GM10248 (cell line): ENCODE measurements at regions of chr12 and their contacts with region 1.

Region 1: DNA sequence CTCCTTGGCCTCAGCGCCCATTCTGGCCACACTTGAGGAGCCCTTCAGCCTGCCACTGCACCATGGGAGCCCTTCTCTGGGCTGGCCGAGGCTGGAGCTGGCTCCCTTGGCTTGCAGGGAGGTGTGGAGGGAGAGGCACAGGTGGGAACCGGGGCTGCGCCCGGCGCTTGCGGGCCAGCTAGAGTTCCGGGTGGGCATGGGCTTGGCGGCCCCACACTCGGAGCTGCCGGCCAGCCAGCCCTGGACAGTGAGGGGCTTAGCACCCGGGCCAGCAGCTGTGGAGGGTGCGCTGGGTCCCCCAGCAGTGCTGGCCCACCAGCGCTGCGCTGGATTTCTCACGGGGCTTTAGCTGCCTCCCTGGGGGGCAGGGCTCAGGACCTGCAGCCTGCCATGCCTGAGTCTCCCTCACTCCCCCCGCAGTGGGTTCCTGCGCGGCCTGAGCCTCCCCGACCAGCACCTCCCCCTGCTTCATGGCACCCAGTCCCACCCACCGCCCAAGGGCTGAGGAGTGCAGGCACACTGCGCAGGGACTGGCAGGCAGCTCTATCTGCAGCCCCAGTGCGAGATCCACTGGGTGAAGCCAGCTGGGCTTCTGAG is 28.0 kb downstream of the TMEM117 start:
- DNase-seq: no peak
- CTCF ChIP-seq: no peak

Region 2: GRCh38 chr12:43676183-43676813 is 187.6 kb before region 1 on chr12:
- CTCF ChIA-PET with region 1: no interaction called
- POLR2A ChIA-PET with region 1: no interaction called
- DNase-seq: peak; percentile 51
- CTCF ChIP-seq: peak; percentile 56

Region 3: DNA sequence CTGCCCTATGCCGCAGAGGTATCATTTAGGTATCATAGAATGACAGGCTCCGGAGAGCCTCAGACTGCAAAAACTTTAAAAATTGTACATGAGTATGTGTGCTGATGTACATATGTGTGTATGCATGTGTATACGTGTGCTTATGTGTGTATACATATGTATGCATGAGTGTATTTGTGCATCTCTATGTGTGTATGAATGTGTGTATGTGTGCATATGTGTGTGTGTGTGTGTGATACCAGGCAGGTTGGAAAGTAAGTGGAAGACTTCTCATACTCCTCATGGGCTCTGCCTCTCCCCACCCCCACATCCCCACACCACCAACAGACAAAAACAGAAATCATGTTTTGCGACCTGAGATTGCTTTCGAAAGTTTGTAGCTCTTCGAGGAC is 28.6 kb before region 1 on chr12:
- CTCF ChIA-PET with region 1: no interaction called
- POLR2A ChIA-PET with region 1: no interaction called
- DNase-seq: no peak
- CTCF ChIP-seq: no peak

Region 4: DNA sequence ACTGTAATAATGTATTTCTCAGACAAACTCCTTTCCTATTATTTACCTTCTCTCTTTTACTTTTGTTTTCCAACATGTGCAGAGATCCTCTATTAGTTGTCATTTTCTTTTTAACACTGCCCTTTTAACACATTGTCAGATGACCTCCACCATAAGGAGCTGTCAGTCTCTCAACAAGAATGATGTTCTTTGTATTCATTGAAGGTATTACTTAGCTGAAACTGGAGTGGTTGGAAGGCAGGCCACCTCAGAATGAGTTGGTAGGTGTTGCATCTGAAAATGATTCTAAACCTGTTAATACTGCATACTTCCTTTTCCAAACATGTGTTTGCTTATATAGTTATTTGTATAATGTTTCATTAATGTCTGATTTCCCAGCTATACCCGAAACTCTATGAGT is 11.1 kb before region 1 on chr12:
- CTCF ChIA-PET with region 1: interaction called, 10 read pairs
- POLR2A ChIA-PET with region 1: no interaction called
- DNase-seq: no peak
- CTCF ChIP-seq: no peak